Prostate gland (tissue), 2 donors: ENCODE measurements at regions of chr5 and their contacts with region 1.

Region 1: GRCh38 chr5:143403593-143404415 is at the start of gene NR3C1:
- DNase-seq: peak; percentile 78
- H3K4me3 ChIP-seq: peak within 1 kb of the TSS; percentile 83 to 86
- H3K27ac ChIP-seq: peak within 1 kb of the TSS; percentile 95 to 96
- H3K4me1 ChIP-seq: no peaks in the 10 kb centered on the region
- H3K27me3 ChIP-seq: no peaks in the 10 kb centered on the region
- CTCF ChIP-seq: peak; percentile 24 to 65 (median 40)
- POLR2A ChIP-seq: peak; percentile 45
- total RNA-seq, gene NR3C1: 42.4 to 55.5 TPM

Region 2: DNA sequence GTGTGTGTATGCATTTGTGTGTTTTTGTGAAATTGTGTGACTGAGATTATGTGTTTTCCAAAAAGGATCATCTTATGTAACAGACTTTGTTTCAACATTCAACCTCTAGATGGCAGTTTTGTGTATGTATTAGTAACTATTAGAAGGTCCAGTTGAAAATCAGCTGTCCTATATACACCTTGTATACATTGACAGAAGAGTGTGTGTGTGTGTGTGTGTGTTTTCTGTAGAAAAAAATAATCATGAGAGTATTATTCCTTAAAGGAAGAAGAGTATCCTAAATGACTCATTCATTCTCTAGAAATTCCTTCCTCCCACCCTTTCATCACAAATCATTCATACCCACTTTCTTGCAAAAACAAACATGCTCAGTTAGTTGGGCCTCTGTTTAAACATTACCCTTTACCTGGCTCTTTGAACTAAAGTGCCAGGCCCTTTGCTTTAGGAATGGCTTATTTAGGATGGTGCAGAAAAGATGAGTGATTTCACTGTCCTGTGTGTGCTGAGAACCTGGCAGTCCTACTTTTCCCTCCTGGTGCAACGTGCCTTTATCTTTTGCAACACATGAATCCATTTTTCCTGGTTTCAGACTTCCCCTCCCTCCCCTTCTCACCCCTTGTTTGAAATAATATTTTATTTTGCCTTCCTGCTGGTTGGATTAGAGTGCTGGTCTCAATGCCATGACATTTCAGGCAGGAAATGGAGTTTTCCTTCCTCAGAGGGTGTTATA is 481.4 kb before region 1 on chr5:
- intact Hi-C with region 1: loop called (anchors 5 kb)
- DNase-seq: no peak
- H3K4me3 ChIP-seq: no peak overlapping the region
- H3K27ac ChIP-seq: no peak overlapping the region
- H3K4me1 ChIP-seq: no peaks in the 10 kb centered on the region
- H3K27me3 ChIP-seq: no peaks in the 10 kb centered on the region
- CTCF ChIP-seq: peak in 3 of 4 experiments; percentile 40 to 74 (median 67)
- POLR2A ChIP-seq: no peak

Region 3: DNA sequence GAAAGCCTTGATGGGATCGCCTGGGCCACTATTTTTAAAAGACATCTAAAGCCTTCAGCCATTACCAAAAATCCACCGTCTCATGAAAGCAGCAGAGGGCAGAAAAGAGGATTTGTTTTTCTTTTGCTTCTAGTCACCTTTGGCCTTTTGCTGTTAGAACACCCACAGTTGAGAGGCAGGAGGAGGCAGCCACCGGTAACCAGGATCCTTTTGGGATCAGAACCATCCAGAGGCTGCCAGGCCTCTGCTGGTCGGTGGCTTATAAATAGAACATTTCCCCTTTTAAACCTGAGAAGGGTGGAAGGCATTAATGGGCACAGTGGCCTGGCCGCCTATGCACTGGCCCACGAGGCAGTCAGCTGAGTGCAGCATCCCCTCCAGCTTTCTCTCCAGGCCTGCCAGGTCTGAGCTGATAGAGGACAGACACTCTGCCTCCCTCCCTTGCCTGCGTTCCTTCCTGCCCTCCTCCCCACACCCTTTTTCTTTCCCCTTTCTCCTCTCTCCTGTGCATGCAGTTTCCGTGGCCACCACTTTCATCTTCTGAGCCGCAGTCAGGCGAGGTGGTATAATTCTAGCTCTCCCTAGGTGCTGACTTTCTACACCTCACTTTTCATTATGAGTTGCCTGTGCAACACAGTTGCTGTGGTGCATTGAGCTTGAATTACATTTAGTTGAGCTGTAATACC is 380.2 kb before region 1 on chr5:
- intact Hi-C with region 1: loop called (anchors 2 kb)
- DNase-seq: peak; percentile 27
- H3K4me3 ChIP-seq: no peak overlapping the region
- H3K27ac ChIP-seq: no peak overlapping the region
- H3K4me1 ChIP-seq: no peaks in the 10 kb centered on the region
- H3K27me3 ChIP-seq: no peaks in the 10 kb centered on the region
- CTCF ChIP-seq: no peak
- POLR2A ChIP-seq: no peak

Region 4: GRCh38 chr5:143153332-143154119 is 250.3 kb before region 1 on chr5:
- intact Hi-C with region 1: loop called (anchors 5 kb)
- DNase-seq: peak; percentile 30
- H3K4me3 ChIP-seq: no peak overlapping the region
- H3K27ac ChIP-seq: peak overlapping the region; percentile 26 to 35
- H3K4me1 ChIP-seq: peaks cover 3% of the 10 kb centered on the region
- H3K27me3 ChIP-seq: no peaks in the 10 kb centered on the region
- CTCF ChIP-seq: no peak
- POLR2A ChIP-seq: no peak

Region 5: GRCh38 chr5:143524338-143524945 is 120.6 kb after region 1 on chr5:
- intact Hi-C with region 1: no loop called
- DNase-seq: no peak
- H3K4me3 ChIP-seq: no peak overlapping the region
- H3K27ac ChIP-seq: no peak overlapping the region
- H3K4me1 ChIP-seq: no peaks in the 10 kb centered on the region
- H3K27me3 ChIP-seq: no peaks in the 10 kb centered on the region
- CTCF ChIP-seq: no peak
- POLR2A ChIP-seq: no peak

Region 6: GRCh38 chr5:143824851-143825720 is 421.3 kb after region 1 on chr5:
- intact Hi-C with region 1: loop called (anchors 5 kb)
- DNase-seq: peak; percentile 75
- H3K4me3 ChIP-seq: no peak overlapping the region
- H3K27ac ChIP-seq: no peak overlapping the region
- H3K4me1 ChIP-seq: no peaks in the 10 kb centered on the region
- H3K27me3 ChIP-seq: no peaks in the 10 kb centered on the region
- CTCF ChIP-seq: peak; percentile 76 to 95 (median 88)
- POLR2A ChIP-seq: no peak

Region 7: DNA sequence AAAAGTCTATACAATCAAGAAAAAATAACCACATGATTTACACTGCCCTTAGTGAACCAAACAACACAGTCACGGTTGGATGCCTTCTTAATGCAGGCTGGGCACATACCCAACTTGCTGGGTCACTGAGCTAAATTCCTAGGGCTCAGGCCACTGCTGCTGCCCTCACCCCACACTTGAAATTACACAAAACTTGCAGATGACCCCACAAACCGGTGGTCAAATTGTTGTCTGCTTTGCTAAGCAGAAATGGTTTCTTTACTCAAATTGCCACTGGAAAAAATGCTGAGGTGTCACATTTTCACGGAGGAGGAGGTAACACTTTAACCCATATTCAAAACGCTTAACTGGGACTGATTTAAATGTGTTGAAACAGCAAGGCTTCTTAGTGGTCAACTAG is 470.5 kb after region 1 on chr5:
- intact Hi-C with region 1: no loop called
- DNase-seq: no peak
- H3K4me3 ChIP-seq: no peak overlapping the region
- H3K27ac ChIP-seq: no peak overlapping the region
- H3K4me1 ChIP-seq: no peaks in the 10 kb centered on the region
- H3K27me3 ChIP-seq: no peaks in the 10 kb centered on the region
- CTCF ChIP-seq: no peak
- POLR2A ChIP-seq: no peak